GM12878 (cell line): ENCODE measurements at regions of chr1 and their contacts with region 1.

Region 1: GRCh38 chr1:47192458-47193384 is 2.9 kb upstream of the PDZK1IP1 start:
- DNase-seq: no peak
- ATAC-seq: peak; percentile 94
- H3K4me3 ChIP-seq: no peak overlapping the region
- H3K27ac ChIP-seq: no peak overlapping the region
- H3K4me1 ChIP-seq: no peaks in the 10 kb centered on the region
- H3K27me3 ChIP-seq: peaks cover 0 to 5% of the 10 kb centered on the region in 2 experiments; a peak in 1 of 4 replicates
- CTCF ChIP-seq: peak; percentile 86 to 96 (median 95)
- EP300 ChIP-seq: no peak
- POLR2A ChIP-seq: no peak
- RAD21 ChIP-seq: peak; percentile 80

Region 2: DNA sequence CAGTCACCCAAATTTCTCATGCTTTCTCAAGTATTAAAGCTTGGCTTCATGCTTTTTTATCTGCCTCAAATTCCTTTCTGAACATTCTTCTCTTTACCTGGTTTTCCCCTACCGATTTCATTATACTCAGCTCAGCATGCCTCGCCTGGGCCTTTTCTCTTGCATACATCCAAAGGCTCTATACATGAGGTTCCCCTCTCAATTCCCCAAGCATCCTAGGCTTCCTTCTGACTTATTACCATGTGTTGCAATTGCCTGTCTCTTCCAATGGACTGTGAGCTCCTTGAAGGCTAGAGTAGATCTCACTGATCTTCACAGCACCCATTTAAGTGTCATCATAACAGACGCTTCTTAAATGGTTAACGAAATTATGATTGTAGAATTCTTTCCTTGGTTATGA is 79.5 kb before region 1 on chr1:
- CTCF ChIA-PET with region 1: no interaction called
- POLR2A ChIA-PET with region 1: no interaction called
- RAD21 ChIA-PET with region 1: no interaction called
- SMC1A ChIA-PET with region 1: no interaction called
- in situ Hi-C with region 1: no loop called
- intact Hi-C with region 1: no loop called
- DNase-seq: no peak
- ATAC-seq: no peak
- H3K4me3 ChIP-seq: no peak overlapping the region
- H3K27ac ChIP-seq: no peak overlapping the region
- H3K4me1 ChIP-seq: no peaks in the 10 kb centered on the region
- H3K27me3 ChIP-seq: no peaks in the 10 kb centered on the region; a peak in 1 of 4 replicates
- CTCF ChIP-seq: no peak
- EP300 ChIP-seq: no peak
- POLR2A ChIP-seq: no peak
- RAD21 ChIP-seq: no peak

Region 3: DNA sequence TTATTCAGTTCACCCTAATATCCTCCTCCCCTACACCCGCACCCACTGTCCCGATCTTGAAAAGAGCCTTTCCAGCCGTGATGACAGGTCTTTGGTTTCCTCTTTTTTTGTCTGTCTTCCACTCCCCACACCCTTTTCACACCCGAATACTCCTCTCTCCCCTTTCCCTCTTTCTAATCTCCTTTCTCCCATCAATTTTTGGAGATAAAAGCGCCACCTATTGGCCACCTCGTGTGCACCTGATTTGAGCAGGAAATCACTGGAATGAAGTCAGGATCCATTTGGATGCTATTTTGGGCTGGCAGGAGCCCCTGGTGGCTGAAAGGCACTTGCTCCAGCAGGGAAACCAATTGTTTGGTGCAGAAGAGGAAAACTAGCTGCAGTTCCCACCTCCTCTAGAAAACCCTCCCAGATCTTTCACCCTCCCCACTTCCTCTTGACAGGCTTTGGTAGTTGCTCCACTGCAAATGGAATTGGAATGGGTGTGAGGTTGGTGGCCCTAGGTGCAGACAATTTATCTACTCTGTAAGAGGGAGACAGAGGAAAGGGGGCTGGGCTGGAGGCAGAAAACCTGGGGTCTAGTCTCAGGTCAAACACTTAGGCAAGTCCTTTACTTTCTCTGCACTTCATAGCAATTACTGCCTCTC is 231.7 kb after region 1 on chr1:
- CTCF ChIA-PET with region 1: interaction called, 5 read pairs
- POLR2A ChIA-PET with region 1: no interaction called
- RAD21 ChIA-PET with region 1: no interaction called
- SMC1A ChIA-PET with region 1: no interaction called
- in situ Hi-C with region 1: no loop called
- intact Hi-C with region 1: loop called (anchors 10 kb)
- DNase-seq: no peak
- ATAC-seq: no peak; the same call in 2 of the 3 replicates
- H3K4me3 ChIP-seq: no peak overlapping the region
- H3K27ac ChIP-seq: no peak overlapping the region
- H3K4me1 ChIP-seq: no peaks in the 10 kb centered on the region
- H3K27me3 ChIP-seq: no peaks in the 10 kb centered on the region
- CTCF ChIP-seq: peak; percentile 59 to 68 (median 64); a peak in 5 of 6 replicates
- EP300 ChIP-seq: no peak
- POLR2A ChIP-seq: no peak
- RAD21 ChIP-seq: peak; percentile 47; the same call in 1 of the 2 replicates

Region 4: GRCh38 chr1:47618830-47619229 is 426.1 kb after region 1 on chr1:
- CTCF ChIA-PET with region 1: no interaction called
- POLR2A ChIA-PET with region 1: no interaction called
- RAD21 ChIA-PET with region 1: no interaction called
- SMC1A ChIA-PET with region 1: no interaction called
- in situ Hi-C with region 1: no loop called
- intact Hi-C with region 1: no loop called
- DNase-seq: no peak
- ATAC-seq: no peak
- H3K4me3 ChIP-seq: no peak overlapping the region
- H3K27ac ChIP-seq: no peak overlapping the region
- H3K4me1 ChIP-seq: no peaks in the 10 kb centered on the region
- H3K27me3 ChIP-seq: no peaks in the 10 kb centered on the region
- CTCF ChIP-seq: no peak
- EP300 ChIP-seq: no peak
- POLR2A ChIP-seq: no peak
- RAD21 ChIP-seq: no peak